Esophagus squamous epithelium (tissue), 5 donors: ENCODE measurements at regions of chr17 and their contacts with region 1.

Region 1: GRCh38 chr17:7515911-7516610 is 31.9 kb downstream of the POLR2A start:
- DNase-seq: no peak
- H3K4me3 ChIP-seq: no peak overlapping the region
- H3K27ac ChIP-seq: peak overlapping the region in 1 of 4 donors; percentile 9
- H3K4me1 ChIP-seq: no peaks in the 10 kb centered on the region
- H3K27me3 ChIP-seq: no peaks in the 10 kb centered on the region
- CTCF ChIP-seq: no peak
- POLR2A ChIP-seq: no peak

Region 2: GRCh38 chr17:7393613-7394451 is 122.2 kb before region 1 on chr17:
- intact Hi-C with region 1: no loop called
- DNase-seq: no peak
- H3K4me3 ChIP-seq: peak overlapping the region; percentile 75 to 93 (median 86)
- H3K27ac ChIP-seq: peak overlapping the region; percentile 87 to 97 (median 94)
- H3K4me1 ChIP-seq: peaks cover 11 to 32% (median 17%) of the 10 kb centered on the region in 3 donors
- H3K27me3 ChIP-seq: no peaks in the 10 kb centered on the region
- CTCF ChIP-seq: no peak
- POLR2A ChIP-seq: no peak

Region 3: GRCh38 chr17:7557775-7558543 is 41.9 kb after region 1 on chr17:
- intact Hi-C with region 1: loop called (anchors 2 kb)
- DNase-seq: no peak
- H3K4me3 ChIP-seq: peak overlapping the region; percentile 7 to 98 (median 70)
- H3K27ac ChIP-seq: peak overlapping the region; percentile 82 to 98 (median 96)
- H3K4me1 ChIP-seq: peaks cover 37 to 65% (median 46%) of the 10 kb centered on the region in 3 donors
- H3K27me3 ChIP-seq: no peaks in the 10 kb centered on the region
- CTCF ChIP-seq: peak in 1 of 6 experiments; percentile 4
- POLR2A ChIP-seq: peak in 2 of 4 donors; percentile 36 to 61